ENCODE measurements at regions of chr9 and their contacts with region 1.

Region 1: DNA sequence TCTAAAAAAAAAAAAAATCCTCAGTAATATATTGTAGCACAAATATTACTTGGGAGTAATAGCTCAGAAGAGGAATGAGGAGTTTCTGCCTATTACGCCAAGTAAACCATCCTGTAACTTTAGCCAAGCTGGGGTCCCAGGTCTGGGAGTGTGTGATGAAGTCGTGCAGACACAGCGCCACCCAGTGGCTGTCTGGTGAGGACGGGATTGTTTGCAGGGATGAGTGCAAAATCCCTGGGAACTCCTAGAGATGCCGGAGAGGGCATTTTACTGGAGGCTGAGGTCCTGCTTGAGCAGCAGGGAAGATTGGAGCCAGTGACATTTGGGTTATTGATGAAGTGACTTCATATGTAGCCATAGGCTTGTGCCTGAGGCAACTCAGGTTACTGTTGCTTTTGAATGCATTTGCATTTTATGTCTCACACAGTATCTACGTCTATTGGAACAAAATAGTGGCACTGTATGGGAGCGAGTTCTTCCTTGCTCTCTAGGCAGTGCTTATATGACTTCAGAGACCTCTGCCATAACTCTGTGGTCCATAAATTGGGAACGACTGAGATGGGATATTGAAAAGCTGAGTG is 72.8 kb downstream of the PSAT1 start:
- DNase-seq: peak; percentile 42
- H3K4me3 ChIP-seq: no peak overlapping the region
- H3K27ac ChIP-seq: no peak overlapping the region
- H3K4me1 ChIP-seq: no peaks in the 10 kb centered on the region
- H3K27me3 ChIP-seq: no peaks in the 10 kb centered on the region
- CTCF ChIP-seq: peak; percentile 83 to 93

Region 2: DNA sequence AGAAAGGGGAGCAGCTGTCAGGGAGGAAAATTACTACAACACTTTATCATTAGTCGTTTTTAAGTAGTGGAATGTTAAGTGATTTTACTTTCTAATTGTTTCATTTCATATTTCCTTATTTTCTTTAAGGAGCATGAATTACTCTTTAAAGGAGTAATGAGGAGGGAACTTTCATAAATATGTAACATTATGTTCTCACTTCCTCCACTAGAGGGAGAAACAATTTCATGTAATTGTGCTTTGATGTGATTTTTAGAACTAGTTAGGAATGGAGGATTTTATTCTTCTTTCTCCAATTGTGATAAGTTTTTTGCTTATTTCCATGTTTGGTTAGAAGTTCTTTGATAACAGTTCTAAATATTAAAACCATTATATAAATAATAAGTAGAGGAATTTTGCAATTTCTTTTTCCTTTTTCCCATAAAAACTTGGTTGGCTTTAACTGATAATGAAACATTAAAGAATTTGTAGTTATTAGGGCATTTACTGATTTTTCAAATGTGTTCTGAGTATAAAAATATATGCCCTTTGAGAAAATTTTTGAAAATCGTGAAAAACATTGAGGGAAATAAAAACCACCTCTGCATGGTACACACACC is 108.2 kb before region 1 on chr9:
- CTCF ChIA-PET with region 1: no interaction called
- dilution Hi-C with region 1: no loop called
- in situ Hi-C with region 1: loop called in 1 of 2 experiments (anchors 10 kb)
- intact Hi-C with region 1: loop called (anchors 1 kb)
- DNase-seq: peak; percentile 9
- H3K4me3 ChIP-seq: no peak overlapping the region
- H3K27ac ChIP-seq: no peak overlapping the region
- H3K4me1 ChIP-seq: no peaks in the 10 kb centered on the region
- H3K27me3 ChIP-seq: no peaks in the 10 kb centered on the region
- CTCF ChIP-seq: peak; percentile 54 to 61

Region 3: DNA sequence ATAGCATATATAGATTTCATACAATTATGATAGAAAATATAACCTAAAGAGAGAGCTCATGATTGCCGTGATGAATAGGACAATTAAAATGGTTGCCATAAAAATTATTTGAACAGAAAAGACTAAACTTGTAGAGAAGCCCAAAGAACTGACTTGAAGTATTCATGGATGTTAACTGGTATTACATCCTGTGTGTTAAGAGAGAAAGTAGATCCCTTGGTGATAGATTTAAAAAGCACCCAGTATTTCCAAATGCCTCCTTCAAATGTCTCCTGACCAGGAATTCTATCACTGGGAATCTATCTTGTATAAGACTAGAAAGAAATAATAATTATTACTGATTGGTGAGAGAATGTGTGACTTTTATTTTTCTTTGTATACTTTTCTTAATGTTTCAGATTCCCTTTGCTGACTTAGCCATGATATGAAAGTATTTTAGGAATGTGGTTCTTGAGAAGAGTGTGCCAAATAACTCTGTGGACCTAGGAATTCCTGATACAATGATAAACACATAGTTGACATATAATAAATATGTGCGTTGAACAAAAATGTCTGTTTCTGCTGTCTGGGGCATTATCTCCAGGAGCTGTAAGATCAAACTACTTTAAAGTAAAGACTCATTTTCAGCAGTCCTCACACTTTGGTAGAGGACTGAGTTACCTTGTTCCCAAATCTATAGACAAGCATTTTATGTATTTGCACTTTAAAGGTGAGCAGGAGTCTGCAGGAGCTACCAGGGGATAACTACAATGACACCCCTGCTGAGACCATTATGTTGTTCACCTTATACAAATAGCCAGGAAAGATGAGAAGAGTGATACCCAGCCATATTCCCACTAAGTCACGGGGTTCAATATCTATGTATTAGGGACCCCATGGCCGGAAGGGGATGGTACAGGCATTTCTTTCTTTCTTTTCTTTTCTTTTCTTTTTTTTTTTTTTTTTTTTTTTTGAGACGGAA is 990.9 kb after region 1 on chr9:
- CTCF ChIA-PET with region 1: no interaction called
- dilution Hi-C with region 1: no loop called
- in situ Hi-C with region 1: no loop called
- intact Hi-C with region 1: no loop called
- DNase-seq: no peak
- H3K4me3 ChIP-seq: no peak overlapping the region
- H3K27ac ChIP-seq: no peak overlapping the region
- H3K4me1 ChIP-seq: no peaks in the 10 kb centered on the region
- H3K27me3 ChIP-seq: peaks cover 3% of the 10 kb centered on the region
- CTCF ChIP-seq: no peak